HAP-1 (cell line): ENCODE measurements at regions of chr3 and their contacts with region 1.

Region 1: GRCh38 chr3:160707187-160707794 is 30.3 kb downstream of the ARL14 start:
- DNase-seq: peak; percentile 41 to 61
- H3K4me3 ChIP-seq: no peak overlapping the region
- H3K4me1 ChIP-seq: peaks cover 5% of the 10 kb centered on the region
- H3K27me3 ChIP-seq: no peaks in the 10 kb centered on the region

Region 2: GRCh38 chr3:161423911-161424522 is 716.7 kb after region 1 on chr3:
- in situ Hi-C with region 1: loop called (anchors 25 kb)
- DNase-seq: peak in 1 of 2 experiments; percentile 50
- H3K4me3 ChIP-seq: no peak overlapping the region
- H3K4me1 ChIP-seq: peaks cover 14% of the 10 kb centered on the region
- H3K27me3 ChIP-seq: no peaks in the 10 kb centered on the region